AG04450 (cell line): ENCODE measurements at regions of chr2 and their contacts with region 1.

Region 1: DNA sequence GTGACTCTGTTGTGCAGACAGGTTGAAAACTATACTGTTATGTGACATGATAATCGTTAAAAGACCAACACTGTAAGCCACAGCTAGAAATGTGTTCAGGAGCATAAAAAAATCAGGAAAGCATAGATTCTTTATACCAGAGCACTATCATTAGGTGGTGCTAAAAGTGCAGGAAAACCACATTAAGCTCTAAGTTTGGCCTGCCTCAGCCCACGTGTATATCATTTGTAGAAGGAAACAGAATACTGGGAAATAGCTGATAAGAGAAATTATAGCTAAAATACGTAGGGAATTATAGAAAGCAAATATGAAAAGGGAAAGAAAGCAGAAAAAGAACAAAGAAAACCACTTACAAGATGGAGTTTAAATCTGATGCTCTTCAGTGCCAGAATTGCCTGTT is 26.5 kb upstream of the C2orf74 start:
- DNase-seq: no peak
- H3K4me3 ChIP-seq: no peak overlapping the region
- H3K27ac ChIP-seq: no peak overlapping the region
- H3K27me3 ChIP-seq: no peaks in the 10 kb centered on the region
- CTCF ChIP-seq: peak; percentile 48

Region 2: DNA sequence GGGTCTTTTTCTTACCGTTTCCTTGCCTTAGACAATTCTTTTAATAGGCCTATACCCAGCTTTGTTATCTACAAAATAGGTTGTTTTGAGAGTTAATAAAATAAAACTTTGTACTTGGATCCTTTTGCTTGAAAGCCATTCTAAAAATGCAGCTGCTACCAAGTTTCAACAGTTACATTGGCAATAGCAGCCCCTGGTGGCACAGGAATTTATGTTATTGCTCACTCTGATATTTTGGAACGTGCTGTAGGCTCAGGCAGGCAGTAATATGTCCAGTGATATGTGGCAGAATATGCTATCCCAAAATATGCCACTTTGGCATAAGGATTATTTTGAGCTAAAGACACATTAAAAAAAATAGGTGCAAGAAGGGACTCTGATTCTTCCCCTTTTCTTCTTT is 763.3 kb after region 1 on chr2:
- CTCF ChIA-PET with region 1: interaction called, 15 read pairs
- POLR2A ChIA-PET with region 1: no interaction called
- DNase-seq: no peak
- H3K4me3 ChIP-seq: no peak overlapping the region
- H3K27ac ChIP-seq: no peak overlapping the region
- H3K27me3 ChIP-seq: no peaks in the 10 kb centered on the region
- CTCF ChIP-seq: peak; percentile 60